Ovary (tissue), 10 donors: ENCODE measurements at regions of chr6 and their contacts with region 1.

Region 1: GRCh38 chr6:142387997-142388815 is 86.4 kb downstream of the ADGRG6 start:
- DNase-seq: no peak
- H3K4me3 ChIP-seq: no peak overlapping the region
- H3K27ac ChIP-seq: no peak overlapping the region
- H3K4me1 ChIP-seq: no peaks in the 10 kb centered on the region
- H3K27me3 ChIP-seq: no peaks in the 10 kb centered on the region
- CTCF ChIP-seq: no peak
- EP300 ChIP-seq: no peak
- POLR2A ChIP-seq: no peak

Region 2: DNA sequence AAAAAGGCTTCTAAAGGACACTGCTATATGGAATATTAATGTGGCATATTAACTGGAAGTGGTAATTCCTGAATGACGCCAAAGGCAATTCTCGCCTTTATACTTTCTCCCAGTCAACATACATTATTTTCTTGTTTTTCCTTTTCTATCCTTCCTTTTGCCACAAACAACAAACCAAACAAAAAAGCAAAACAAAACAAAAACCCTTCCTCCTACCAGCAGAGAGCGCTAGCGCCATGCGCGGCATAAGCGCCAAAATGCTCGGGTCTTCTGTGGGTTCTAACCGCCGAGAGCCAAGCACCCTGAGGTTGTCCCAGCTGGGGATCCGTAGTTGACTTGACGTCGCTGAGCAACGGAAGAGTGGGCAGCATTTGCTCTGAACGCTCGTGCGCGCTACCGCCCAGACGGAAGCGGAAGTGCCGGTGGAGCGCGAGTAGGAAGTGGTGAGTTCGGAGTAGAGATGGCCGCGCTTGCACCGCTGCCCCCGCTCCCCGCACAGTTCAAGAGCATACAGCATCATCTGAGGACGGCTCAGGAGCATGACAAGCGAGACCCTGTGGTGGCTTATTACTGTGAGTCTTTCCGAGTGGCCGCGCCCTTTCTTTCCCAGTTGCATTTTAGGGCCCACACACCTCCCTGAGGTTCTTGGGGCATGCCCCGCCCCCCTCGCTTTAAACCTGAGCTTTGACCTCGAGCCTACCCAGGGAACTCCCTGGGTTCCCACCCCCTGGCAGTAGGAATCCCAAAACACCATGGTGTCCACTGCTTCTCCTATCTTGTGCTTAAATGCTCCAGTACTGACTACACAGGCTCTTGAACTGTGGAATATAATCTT is 241.2 kb before region 1 on chr6 and contains the starts of genes NMBR and VTA1:
- intact Hi-C with region 1: loop called in 2 of 4 experiments (anchors 10 kb)
- DNase-seq: peak; percentile 95 to 97 (median 95)
- H3K4me3 ChIP-seq: peak within 1 kb of the TSS; percentile 68
- H3K27ac ChIP-seq: no peak within 1 kb of the TSS
- H3K4me1 ChIP-seq: peaks cover 2% of the 10 kb centered on the region
- H3K27me3 ChIP-seq: no peaks in the 10 kb centered on the region
- CTCF ChIP-seq: peak; percentile 86 to 88 (median 87)
- EP300 ChIP-seq: no peak
- POLR2A ChIP-seq: peak; percentile 5
- total RNA-seq, gene NMBR: 0.20 TPM in 1 of 7 donors, not detected in the others
- total RNA-seq, gene VTA1: 17.6 to 33.4 (median 24.5) TPM

Region 3: DNA sequence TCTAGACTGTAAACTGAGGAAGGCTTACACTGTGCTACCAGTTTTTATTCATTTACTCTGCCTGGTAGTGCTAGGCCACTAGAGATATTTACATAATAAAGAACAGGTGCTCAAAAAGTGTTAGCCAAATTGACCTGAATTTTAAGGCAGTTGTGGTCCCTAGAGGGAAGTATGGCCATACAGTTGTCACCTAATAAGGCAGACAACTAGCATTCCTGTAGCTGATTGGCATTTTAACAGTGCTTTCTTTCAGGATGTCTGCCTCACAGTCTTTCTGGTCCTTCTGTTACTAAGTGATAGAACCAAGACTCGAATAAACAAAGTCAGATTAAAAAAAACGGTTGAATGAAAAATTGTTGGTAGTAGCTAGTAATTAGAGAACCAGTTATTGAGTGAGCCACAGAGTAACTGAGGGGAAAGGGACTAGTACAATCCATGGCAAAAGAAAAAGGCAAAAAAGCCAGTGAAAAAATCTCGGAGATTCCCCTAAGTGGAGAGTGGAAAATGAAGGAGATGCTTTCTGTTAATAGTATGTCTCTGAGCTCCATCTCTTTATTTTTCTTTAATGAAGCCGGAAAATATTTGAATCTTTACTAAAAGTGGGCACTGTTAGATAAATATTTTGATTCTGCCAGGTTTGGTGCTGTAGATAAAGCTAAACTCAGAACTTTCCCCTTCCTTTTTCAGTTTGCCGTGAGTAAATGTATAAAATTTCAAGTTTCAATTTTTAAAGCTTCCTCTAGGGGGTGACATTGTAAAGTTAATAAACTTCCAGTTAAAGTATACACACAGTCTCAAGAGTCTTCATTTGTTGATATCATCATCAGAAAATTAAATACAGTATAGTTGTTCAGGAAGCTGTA is 232.1 kb before region 1 on chr6:
- intact Hi-C with region 1: loop called in 1 of 4 experiments (anchors 10 kb)
- DNase-seq: no peak
- H3K4me3 ChIP-seq: no peak overlapping the region
- H3K27ac ChIP-seq: no peak overlapping the region
- H3K4me1 ChIP-seq: no peaks in the 10 kb centered on the region
- H3K27me3 ChIP-seq: no peaks in the 10 kb centered on the region
- CTCF ChIP-seq: no peak
- EP300 ChIP-seq: no peak
- POLR2A ChIP-seq: no peak

Region 4: GRCh38 chr6:142408406-142408805 is 20.2 kb after region 1 on chr6:
- intact Hi-C with region 1: no loop called
- DNase-seq: no peak
- H3K4me3 ChIP-seq: no peak overlapping the region
- H3K27ac ChIP-seq: no peak overlapping the region
- H3K4me1 ChIP-seq: peaks cover 6% of the 10 kb centered on the region
- H3K27me3 ChIP-seq: no peaks in the 10 kb centered on the region
- CTCF ChIP-seq: no peak
- EP300 ChIP-seq: no peak
- POLR2A ChIP-seq: no peak

Region 5: DNA sequence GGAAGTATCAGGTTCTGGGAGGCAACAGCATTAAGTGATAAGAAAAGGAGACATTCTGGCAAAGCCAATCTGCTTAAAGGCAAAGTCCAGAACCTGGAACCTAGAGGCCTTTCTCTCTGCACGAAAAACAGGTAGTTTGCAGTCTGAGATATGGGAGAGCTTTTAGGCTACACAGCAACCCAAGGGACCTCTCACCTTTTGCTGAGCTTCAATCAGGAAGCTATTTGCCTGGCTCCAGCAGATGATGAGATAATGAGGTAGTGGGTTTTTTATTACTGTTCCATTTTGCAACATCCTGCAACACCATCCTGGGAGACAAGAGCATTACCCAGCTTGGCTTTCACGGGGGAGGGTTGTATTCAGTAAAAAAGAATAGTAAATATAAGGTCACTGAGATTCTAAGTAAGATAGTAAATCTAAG is 56.7 kb after region 1 on chr6:
- intact Hi-C with region 1: no loop called
- DNase-seq: no peak
- H3K4me3 ChIP-seq: no peak overlapping the region
- H3K27ac ChIP-seq: no peak overlapping the region
- H3K4me1 ChIP-seq: no peaks in the 10 kb centered on the region
- H3K27me3 ChIP-seq: no peaks in the 10 kb centered on the region
- CTCF ChIP-seq: no peak
- EP300 ChIP-seq: no peak
- POLR2A ChIP-seq: no peak

Region 6: DNA sequence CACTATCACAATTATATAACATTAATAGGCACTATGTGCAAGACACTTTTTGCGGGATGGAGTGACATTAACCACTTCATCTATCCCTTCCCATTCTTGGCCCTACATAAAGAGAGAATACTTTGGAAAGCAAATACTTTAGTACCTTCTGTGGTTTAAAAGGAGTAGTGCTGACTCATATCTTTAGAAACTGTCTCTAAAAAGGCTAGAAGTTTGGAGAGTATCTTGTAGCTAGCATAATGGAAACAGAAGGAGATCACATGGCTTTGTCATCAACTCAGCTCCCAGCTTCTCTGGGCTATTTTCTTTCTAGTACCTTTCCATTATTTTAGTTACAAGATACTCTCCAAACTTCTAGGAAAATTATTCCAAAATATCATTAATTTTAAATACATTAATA is 71.1 kb after region 1 on chr6:
- intact Hi-C with region 1: no loop called
- DNase-seq: no peak
- H3K4me3 ChIP-seq: no peak overlapping the region
- H3K27ac ChIP-seq: no peak overlapping the region
- H3K4me1 ChIP-seq: no peaks in the 10 kb centered on the region
- H3K27me3 ChIP-seq: no peaks in the 10 kb centered on the region
- CTCF ChIP-seq: no peak
- EP300 ChIP-seq: no peak
- POLR2A ChIP-seq: no peak